Activated CD4-positive, alpha-beta T cell treated with anti-CD3 and anti-CD28 coated beads, Interleukin-2, amount 10 ng/mL, durations not matched to agents 24 days and 14 days (primary cell): ENCODE measurements at regions of chr12 and their contacts with region 1.

Region 1: DNA sequence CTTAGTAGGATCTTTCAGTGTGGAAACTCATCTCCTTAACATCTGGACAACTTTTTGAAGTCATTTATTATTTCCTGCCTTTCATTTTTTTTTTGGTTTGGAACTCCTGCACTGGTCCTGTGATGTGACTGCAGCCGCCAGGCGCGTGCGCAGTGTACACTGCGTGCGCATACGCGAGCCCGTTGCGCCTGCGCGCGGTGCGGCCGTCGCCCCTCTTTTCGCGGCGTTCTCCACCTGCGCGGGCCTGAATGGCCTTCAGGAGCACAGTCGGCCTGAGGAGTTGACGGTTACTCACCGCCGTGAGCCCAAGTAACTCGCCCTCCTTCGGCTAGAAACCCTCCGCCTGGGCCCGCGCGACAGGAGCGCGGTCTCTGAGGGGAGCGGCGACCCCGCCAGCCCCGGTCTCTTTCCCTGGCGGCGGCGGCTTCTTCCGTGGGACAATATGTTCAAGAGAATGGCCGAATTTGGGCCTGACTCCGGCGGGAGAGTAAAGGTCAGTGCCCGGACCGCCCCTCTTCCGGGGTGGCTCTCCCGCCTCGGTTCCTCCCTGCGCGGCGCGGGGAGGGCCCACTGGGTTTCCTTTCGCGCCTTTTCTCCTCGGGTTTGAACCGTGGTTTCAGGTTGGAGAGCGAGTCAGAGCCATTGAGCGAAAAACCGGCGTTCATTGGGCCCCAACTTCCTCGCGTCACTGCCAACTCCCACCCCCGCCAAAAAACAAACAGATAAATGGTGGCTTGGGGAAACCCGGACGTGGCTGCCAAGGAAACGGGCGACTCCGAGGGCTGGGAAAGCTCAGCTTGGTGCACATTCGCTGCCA is at the start of gene YEATS4:
- DNase-seq: peak; percentile 96
- H3K4me3 Mint-ChIP-seq: peak within 1 kb of the TSS; percentile 93
- H3K27ac Mint-ChIP-seq: peak within 1 kb of the TSS; percentile 98
- H3K4me1 Mint-ChIP-seq: peaks cover 27% of the 10 kb centered on the region
- H3K27me3 Mint-ChIP-seq: peaks cover 7% of the 10 kb centered on the region
- total RNA-seq, gene YEATS4: 37.9 and 41.8 TPM in 2 replicates

Region 2: DNA sequence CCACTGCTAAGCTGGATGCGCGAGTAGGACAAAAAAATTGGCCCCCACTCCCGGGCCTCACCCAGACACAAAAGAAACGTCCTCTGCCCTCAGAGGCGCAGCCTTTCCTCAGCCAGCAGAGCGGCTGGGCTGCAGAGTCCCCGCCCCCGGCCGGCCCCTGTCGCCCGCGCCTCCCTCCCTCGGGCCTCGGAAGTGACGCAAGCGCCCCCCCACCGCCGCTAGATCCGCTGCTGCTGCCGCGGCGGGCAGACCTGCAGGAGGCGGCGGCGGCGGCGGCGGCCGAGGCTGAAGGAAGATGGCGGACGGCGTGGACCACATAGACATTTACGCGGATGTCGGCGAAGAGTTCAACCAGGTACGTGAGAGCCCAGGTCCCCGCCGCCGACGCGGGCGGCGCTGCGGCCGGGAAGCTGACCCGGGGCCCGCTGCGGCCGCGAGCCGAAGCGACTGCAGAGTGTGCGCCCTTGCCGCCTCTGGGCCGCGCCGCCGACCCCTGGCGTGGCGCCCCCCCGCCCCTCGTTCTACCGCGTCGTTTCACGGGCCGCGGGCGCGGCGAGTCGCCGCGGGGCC is 120.3 kb before region 1 on chr12 and contains the start of gene CPSF6:
- intact Hi-C with region 1: loop called (anchors 2 kb)
- DNase-seq: peak; percentile 99
- H3K4me3 Mint-ChIP-seq: peak within 1 kb of the TSS; percentile 97
- H3K27ac Mint-ChIP-seq: peak within 1 kb of the TSS; percentile 98
- H3K4me1 Mint-ChIP-seq: peaks cover 43% of the 10 kb centered on the region
- H3K27me3 Mint-ChIP-seq: no peaks in the 10 kb centered on the region
- total RNA-seq, gene CPSF6: 114 and 121 TPM in 2 replicates

Region 3: GRCh38 chr12:69341328-69341727 is 18.4 kb before region 1 on chr12:
- intact Hi-C with region 1: no loop called
- DNase-seq: no peak
- H3K4me3 Mint-ChIP-seq: no peak overlapping the region
- H3K27ac Mint-ChIP-seq: no peak overlapping the region
- H3K4me1 Mint-ChIP-seq: no peaks in the 10 kb centered on the region
- H3K27me3 Mint-ChIP-seq: peaks cover 8% of the 10 kb centered on the region

Region 4: GRCh38 chr12:69470189-69471075 is 110.7 kb after region 1 on chr12 and contains the start of gene FRS2:
- intact Hi-C with region 1: loop called (anchors 2 kb)
- DNase-seq: peak; percentile 95
- H3K4me3 Mint-ChIP-seq: peak within 1 kb of the TSS; percentile 98
- H3K27ac Mint-ChIP-seq: peak within 1 kb of the TSS; percentile 98
- H3K4me1 Mint-ChIP-seq: peaks cover 39% of the 10 kb centered on the region
- H3K27me3 Mint-ChIP-seq: no peaks in the 10 kb centered on the region
- total RNA-seq, gene FRS2: 12.1 and 13.6 TPM in 2 replicates

Region 5: DNA sequence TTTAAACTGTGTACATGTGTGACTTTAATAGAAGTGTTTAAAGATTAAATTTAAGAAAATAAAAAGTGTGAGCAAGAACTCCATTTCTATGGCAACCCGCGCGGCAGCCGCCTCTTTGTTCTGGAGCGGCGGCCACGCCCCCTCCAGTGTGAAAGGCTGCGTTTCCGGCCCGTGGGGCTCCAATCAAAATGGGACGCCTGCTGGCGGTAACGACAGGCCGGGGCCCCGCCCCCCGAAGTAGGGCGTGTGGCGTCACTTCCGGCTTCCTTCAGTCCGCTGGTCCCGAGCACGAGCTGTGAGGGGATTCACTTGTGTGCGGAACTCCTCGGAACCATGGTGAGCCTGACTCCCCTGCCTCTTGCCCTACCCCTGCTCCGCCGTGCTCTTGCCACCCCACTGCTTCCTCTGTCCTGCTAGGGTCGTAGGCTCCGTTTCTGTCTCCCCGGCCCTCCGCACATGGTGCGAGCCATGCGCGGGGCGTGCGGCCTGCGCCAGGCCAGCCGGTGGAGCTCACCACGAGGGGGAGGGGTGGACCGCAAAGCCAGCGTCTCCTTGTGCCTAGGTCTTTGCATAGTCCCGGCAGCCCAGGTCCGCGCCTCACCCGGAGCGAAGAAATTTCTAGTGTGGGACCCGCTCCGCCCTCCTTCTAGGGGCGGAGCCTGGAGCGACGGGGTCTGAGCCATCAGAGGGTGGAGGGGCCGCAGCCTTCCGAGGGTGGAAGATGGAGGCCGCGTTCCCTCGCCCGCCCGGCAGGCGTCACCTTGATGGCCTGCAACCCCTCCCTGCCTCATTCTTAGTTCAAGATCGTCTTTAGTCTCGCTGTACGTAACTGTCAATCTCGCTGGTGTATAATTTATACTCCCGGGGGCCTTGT is 225.7 kb after region 1 on chr12 and contains the start of gene CCT2:
- intact Hi-C with region 1: loop called (anchors 1 kb)
- DNase-seq: peak; percentile 99
- H3K4me3 Mint-ChIP-seq: peak within 1 kb of the TSS; percentile 99
- H3K27ac Mint-ChIP-seq: peak within 1 kb of the TSS; percentile 99
- H3K4me1 Mint-ChIP-seq: peaks cover 14% of the 10 kb centered on the region
- H3K27me3 Mint-ChIP-seq: no peaks in the 10 kb centered on the region
- total RNA-seq, gene CCT2: 490 and 511 TPM in 2 replicates

Region 6: DNA sequence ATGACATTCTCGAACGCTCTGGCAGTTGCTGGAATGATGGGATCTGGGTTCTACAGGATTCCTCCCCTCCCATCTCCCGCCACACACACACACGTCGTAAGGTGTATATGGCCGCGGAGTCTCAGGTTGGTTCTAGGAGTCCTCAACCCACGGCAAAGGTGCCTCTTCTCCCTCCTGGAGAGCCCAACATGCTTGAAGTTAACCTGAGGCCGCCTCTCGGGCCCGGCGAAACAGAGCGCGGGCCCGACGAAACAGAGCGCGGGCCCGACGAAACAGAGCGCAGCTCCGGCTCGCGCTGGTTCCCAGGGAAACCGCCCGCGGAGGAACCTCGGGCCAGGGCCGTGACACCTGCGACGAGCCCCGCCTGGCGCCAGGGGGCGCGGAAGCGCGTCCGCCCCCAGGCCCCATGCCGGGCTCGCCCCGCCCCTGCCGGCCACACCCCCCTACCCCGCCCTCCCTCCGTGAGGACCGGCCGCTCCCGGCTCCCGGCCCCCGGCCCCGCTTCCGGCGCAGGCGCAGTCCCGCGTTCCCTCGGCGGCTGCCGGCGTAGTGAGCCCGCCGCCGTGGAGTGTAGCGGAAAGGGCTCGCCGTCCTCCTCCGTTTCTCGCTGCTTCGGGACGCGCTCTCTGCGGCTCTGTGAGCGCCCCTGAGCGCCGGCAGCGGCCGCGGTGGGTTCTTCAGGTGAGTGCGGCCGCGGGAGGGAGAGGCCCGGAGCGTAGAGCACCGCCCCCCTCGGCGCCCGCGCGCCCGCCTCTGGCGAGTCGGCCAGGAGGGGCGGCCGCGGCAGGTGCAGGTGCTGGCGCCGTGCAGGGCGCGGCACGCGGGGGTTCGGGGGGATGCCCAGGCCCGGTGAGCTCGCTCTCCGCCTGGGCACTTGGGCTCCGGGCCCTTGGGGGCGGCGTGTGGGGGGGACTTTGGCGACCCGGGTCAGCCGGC is 378.9 kb after region 1 on chr12 and contains the start of gene RAB3IP:
- intact Hi-C with region 1: loop called (anchors 1 kb)
- DNase-seq: peak; percentile 97
- H3K4me3 Mint-ChIP-seq: peak within 1 kb of the TSS; percentile 86
- H3K27ac Mint-ChIP-seq: peak within 1 kb of the TSS; percentile 76
- H3K4me1 Mint-ChIP-seq: peaks cover 15% of the 10 kb centered on the region
- H3K27me3 Mint-ChIP-seq: peaks cover 33% of the 10 kb centered on the region
- total RNA-seq, gene RAB3IP: 28.5 and 33.6 TPM in 2 replicates